ENCODE measurements at regions of chr6 and their contacts with region 1.

Region 1: DNA sequence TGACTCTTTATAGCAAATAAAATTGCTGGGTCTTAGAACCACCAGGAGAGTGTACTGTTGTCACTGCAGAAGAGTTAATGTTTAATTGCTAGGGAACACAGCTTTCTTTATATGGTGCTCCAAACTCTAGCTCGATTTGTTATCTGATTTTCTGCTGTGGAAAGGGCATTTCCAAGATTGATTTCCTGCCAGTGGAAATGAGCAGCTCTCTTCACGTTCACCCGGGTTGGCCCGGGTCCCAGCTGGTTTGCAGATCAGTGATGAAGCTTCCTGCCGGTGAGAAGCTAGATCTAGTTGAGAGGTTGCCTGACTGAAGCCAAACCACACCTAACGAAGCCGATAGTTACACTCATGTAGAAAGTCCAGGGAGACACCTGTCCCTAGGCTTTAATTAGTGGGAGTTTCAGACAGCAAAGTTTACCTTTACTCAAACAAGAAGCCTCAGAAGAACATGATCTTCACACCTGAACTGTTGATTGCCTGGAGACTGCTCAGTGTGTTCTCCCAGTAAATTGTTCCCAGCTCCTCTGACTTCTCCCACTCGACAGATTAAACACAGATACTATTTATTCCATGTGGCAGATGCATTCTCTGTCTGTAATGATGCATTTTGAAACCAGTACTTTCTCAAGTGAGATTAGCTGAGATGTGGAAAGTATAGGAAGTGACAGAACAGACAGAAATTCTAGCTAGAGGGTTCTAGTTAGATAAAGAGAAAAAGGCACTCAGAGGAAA is 27.8 kb downstream of the PAQR8 start:
- DNase-seq: peak; percentile 74
- H3K4me3 Mint-ChIP-seq: peak overlapping the region; percentile 47
- H3K27ac Mint-ChIP-seq: peak overlapping the region; percentile 76
- H3K4me1 Mint-ChIP-seq: peaks cover 82% of the 10 kb centered on the region
- H3K27me3 Mint-ChIP-seq: no peaks in the 10 kb centered on the region

Region 2: DNA sequence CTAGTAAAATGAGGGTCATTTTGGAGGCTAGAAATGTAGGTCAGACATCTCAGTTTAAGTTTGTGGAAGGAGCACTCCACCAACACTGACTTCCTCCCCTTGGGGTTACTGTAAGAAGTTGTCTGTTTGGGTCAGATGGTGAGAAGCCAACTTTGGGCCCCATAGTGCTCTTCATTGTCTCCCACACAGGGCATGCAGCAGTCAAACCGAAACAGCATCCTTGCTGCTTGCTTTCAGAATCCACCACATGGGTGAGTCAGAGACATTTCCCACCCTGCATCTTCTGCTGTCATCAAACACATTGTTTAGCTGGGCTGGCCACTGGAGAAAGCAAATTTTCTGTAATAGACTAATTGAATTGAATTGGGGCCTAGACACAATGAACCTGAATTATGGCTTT is 162.3 kb before region 1 on chr6:
- CTCF ChIA-PET with region 1: no interaction called
- POLR2A ChIA-PET with region 1: no interaction called
- intact Hi-C with region 1: loop called (anchors 2 kb)
- DNase-seq: peak; percentile 90
- H3K4me3 Mint-ChIP-seq: no peak overlapping the region
- H3K27ac Mint-ChIP-seq: no peak overlapping the region
- H3K4me1 Mint-ChIP-seq: peaks cover 20% of the 10 kb centered on the region
- H3K27me3 Mint-ChIP-seq: peaks cover 39% of the 10 kb centered on the region

Region 3: DNA sequence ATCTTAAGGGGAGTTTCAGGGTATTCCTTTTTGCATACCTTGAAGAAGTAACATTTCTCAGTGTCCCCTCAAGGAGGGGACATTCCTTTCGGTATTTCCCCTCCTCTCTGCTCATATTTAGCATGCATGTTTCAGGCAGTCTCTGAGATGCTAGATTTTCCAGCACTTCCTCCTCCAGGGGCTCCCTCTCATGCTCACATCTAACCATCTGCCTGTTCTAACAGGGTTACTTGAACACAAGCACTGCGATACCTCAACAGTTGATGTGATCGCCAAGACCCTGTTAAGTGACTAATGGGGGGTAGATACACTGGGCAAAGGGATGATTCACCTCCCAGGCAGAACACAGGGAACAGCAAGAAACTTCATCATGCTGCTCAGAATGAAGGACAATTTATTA is 92.4 kb before region 1 on chr6:
- CTCF ChIA-PET with region 1: no interaction called
- POLR2A ChIA-PET with region 1: interaction called, 3 read pairs
- intact Hi-C with region 1: loop called (anchors 1 kb)
- DNase-seq: peak; percentile 23
- H3K4me3 Mint-ChIP-seq: peak overlapping the region; percentile 64
- H3K27ac Mint-ChIP-seq: peak overlapping the region; percentile 88
- H3K4me1 Mint-ChIP-seq: peaks cover 41% of the 10 kb centered on the region
- H3K27me3 Mint-ChIP-seq: no peaks in the 10 kb centered on the region

Region 4: GRCh38 chr6:52361945-52362442 is 27.8 kb before region 1 on chr6 and contains the start of gene PAQR8:
- CTCF ChIA-PET with region 1: interaction called, 15 read pairs
- POLR2A ChIA-PET with region 1: interaction called, 22 read pairs
- intact Hi-C with region 1: loop called (anchors 1 kb)
- DNase-seq: peak; percentile 85
- H3K4me3 Mint-ChIP-seq: peak within 1 kb of the TSS; percentile 99
- H3K27ac Mint-ChIP-seq: peak within 1 kb of the TSS; percentile 92
- H3K4me1 Mint-ChIP-seq: peaks cover 33% of the 10 kb centered on the region
- H3K27me3 Mint-ChIP-seq: no peaks in the 10 kb centered on the region
- total RNA-seq, gene PAQR8: 11.2 to 12.2 TPM

Region 5: GRCh38 chr6:52377538-52378221 is 12.1 kb before region 1 on chr6:
- CTCF ChIA-PET with region 1: interaction called, 7 read pairs
- POLR2A ChIA-PET with region 1: interaction called, 5 read pairs
- intact Hi-C with region 1: loop called (anchors 1 kb)
- DNase-seq: no peak
- H3K4me3 Mint-ChIP-seq: no peak overlapping the region
- H3K27ac Mint-ChIP-seq: no peak overlapping the region
- H3K4me1 Mint-ChIP-seq: peaks cover 61% of the 10 kb centered on the region
- H3K27me3 Mint-ChIP-seq: no peaks in the 10 kb centered on the region

Region 6: GRCh38 chr6:52577022-52577777 is 187.4 kb after region 1 on chr6 and contains the start of gene TRAM2:
- CTCF ChIA-PET with region 1: no interaction called
- POLR2A ChIA-PET with region 1: no interaction called
- intact Hi-C with region 1: no loop called
- DNase-seq: peak; percentile 70
- H3K4me3 Mint-ChIP-seq: peak within 1 kb of the TSS; percentile 77
- H3K27ac Mint-ChIP-seq: peak within 1 kb of the TSS; percentile 59
- H3K4me1 Mint-ChIP-seq: peaks cover 29% of the 10 kb centered on the region
- H3K27me3 Mint-ChIP-seq: no peaks in the 10 kb centered on the region
- total RNA-seq, gene TRAM2: 2.4 to 2.6 TPM

Region 7: GRCh38 chr6:53064726-53065215 is 675.0 kb after region 1 on chr6:
- CTCF ChIA-PET with region 1: no interaction called
- POLR2A ChIA-PET with region 1: no interaction called
- intact Hi-C with region 1: loop called (anchors 2 kb)
- DNase-seq: peak; percentile 98
- H3K4me3 Mint-ChIP-seq: peak overlapping the region; percentile 100
- H3K27ac Mint-ChIP-seq: peak overlapping the region; percentile 97
- H3K4me1 Mint-ChIP-seq: peaks cover 52% of the 10 kb centered on the region
- H3K27me3 Mint-ChIP-seq: no peaks in the 10 kb centered on the region